ENCODE measurements at regions of chr1 and their contacts with region 1.

Region 1: DNA sequence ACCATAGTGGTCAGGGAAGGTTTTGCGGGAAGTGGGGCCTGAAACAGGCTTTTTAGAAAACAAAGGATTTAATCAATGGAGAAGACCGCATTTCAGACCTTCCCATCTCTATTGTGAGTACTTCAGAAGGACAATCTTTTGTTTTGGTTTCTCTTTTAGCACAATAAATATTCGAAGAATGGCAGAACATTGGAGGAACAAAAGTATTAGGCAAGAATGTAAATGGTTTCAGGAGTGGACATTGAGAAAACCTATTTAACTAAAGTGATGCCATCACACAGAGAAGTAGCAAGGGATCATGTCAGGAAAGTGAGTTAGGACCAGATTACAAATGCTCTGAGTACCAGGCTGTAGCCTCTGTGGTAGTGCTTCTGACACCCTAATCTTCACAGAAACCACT is 26.8 kb upstream of the UBE2U start:
- DNase-seq: no peak
- ATAC-seq: no peak

Region 2: GRCh38 chr1:64072089-64072793 is 104.4 kb before region 1 on chr1:
- intact Hi-C with region 1: no loop called
- DNase-seq: no peak
- ATAC-seq: peak; percentile 29

Region 3: DNA sequence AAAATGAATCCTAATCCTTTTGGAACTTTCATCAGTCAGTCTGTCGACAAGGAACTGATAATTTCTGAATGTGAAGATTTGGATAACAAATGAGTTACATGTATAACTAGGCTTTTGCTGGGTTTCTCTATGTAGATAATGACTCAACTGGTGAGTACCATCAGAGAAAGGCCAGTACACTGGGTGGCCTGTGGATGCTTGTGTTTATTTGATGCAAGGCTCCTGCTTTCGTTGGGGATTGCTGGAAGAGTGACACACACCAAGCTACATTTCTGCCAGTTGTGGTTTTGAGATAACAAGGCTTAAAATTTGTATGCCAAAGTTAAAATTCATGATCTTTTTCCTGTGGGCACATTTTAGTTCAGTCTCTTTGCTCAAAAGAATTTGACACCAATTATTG is 88.9 kb before region 1 on chr1:
- intact Hi-C with region 1: no loop called
- DNase-seq: no peak
- ATAC-seq: no peak

Region 4: DNA sequence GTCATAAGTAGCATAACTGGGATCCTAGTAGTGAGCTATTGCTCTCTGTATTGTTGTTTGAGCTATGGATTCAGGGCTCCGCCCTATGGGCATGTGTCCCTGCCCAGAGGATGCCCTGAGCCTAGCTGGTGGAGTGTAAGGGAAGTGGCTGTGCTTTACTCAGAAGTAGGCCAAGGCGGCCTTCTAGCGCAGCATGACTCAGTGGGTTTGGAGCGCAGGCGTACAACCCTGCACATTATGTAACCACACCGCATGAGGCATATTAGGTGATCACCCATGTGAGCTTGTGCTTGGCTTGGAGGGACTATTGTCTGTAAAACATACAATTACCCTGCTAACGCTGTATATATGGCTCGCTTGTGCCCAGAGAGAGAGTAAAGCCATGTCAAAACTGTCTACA is 15.6 kb after region 1 on chr1:
- intact Hi-C with region 1: loop called (anchors 1 kb)
- DNase-seq: no peak
- ATAC-seq: no peak

Region 5: DNA sequence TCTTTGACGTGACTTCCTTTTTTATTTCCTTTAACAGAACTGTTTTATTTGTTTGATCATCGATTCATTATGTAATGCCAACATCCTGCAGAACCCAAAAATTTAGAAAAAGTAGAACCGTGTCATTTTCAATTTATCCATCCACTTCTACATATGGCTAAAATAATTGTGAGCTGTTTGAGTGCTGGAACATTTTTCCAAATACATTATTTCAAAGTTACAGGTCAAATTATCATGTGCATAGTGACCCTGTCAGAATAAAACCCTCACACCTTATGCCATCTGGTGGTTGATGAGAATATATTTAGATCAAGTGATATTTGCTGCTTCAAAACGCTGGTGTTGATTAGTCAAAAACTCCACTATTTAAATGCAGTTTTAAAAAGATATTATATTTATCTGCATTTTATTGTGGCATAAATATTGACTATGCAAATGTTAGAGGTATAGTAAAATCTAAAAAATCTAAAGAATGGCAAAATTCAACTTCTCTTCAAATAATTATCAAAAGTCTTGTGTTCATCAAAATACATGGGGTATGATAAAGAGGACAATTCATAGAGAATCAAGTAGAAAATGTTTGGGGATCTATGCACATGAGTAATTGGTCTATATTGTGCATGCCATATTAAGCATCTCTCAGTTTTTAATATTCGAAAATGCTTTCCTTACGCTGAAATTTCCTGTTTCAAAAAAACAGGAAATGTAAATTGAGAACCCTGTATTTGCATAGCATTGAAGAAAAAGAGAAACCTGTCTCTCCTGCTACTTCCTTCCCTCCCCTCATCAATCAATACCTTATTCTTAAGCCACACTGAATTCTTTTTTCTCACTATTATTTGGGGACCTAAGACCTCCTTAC is 66.5 kb after region 1 on chr1:
- intact Hi-C with region 1: no loop called
- DNase-seq: no peak
- ATAC-seq: no peak

Region 6: GRCh38 chr1:64403331-64403730 is 226.7 kb after region 1 on chr1:
- intact Hi-C with region 1: no loop called
- DNase-seq: no peak
- ATAC-seq: no peak

Measured in Right ventricle myocardium inferior (tissue), 1 donor.